B cell (primary cell): ENCODE measurements at regions of chr13 and their contacts with region 1.

Region 1: DNA sequence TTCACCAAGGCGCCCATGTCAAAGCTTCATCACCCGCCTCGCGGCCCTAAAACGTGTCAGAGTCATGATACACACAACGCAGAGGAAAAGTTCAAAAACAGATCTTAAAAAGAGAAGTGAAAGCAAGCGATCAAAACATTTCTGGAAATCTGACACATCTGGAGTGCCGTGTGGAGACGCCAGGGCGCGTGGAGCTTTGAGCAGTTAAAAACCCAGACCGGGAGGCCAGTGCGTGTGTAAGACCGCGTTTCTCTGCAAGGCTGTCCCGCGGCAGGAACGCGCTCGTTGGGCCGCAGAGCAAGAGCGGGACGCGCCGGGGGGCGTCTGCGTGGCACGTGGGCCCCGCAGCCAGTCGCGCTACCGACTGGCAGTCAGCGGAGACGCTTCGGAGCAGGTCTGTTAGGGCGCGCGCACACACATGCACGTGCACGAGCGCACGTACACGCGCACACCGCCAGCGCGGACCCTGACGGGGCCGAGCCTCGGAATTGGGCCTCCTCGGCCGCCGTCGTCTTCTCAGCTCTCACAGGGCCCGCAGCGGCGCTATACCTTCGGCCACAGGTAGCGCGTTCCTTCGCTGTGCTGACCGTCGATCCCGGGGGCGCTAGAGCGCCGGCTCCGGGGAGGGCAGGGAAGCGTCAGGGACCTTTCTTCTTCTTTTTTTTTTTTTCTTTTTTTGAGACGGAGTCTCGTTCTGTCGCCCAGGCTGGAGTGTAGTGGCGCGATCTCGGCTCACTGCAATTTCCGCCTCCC is 35.8 kb downstream of the RNF6 start:
- DNase-seq: peak; percentile 99
- ATAC-seq: peak; percentile 87
- H3K4me3 ChIP-seq: peak overlapping the region; percentile 66 to 91 (median 73)
- H3K4me3 Mint-ChIP-seq: peak overlapping the region; percentile 91
- H3K27ac ChIP-seq: peak overlapping the region; percentile 86 to 88
- H3K27ac Mint-ChIP-seq: peak overlapping the region; percentile 96
- H3K4me1 ChIP-seq: peaks cover 33 to 44% of the 10 kb centered on the region in 2 donors
- H3K4me1 Mint-ChIP-seq: peaks cover 46% of the 10 kb centered on the region
- H3K27me3 ChIP-seq: no peaks in the 10 kb centered on the region
- H3K27me3 Mint-ChIP-seq: no peaks in the 10 kb centered on the region
- CTCF ChIP-seq: peak; percentile 72

Region 2: GRCh38 chr13:24512197-24512907 is 1673.9 kb before region 1 on chr13 and contains the start of gene PARP4:
- CTCF ChIA-PET with region 1: no interaction called
- POLR2A ChIA-PET with region 1: no interaction called
- intact Hi-C with region 1: loop called (anchors 5 kb)
- DNase-seq: peak; percentile 82
- ATAC-seq: peak; percentile 78
- H3K4me3 ChIP-seq: peak within 1 kb of the TSS; percentile 64 to 95 (median 86)
- H3K4me3 Mint-ChIP-seq: peak within 1 kb of the TSS; percentile 88
- H3K27ac ChIP-seq: peak within 1 kb of the TSS; percentile 57 to 81
- H3K27ac Mint-ChIP-seq: peak within 1 kb of the TSS; percentile 85
- H3K4me1 ChIP-seq: peaks cover 11 to 19% of the 10 kb centered on the region in 2 donors
- H3K4me1 Mint-ChIP-seq: peaks cover 28% of the 10 kb centered on the region
- H3K27me3 ChIP-seq: no peaks in the 10 kb centered on the region
- H3K27me3 Mint-ChIP-seq: no peaks in the 10 kb centered on the region
- CTCF ChIP-seq: no peak
- total RNA-seq, gene PARP4: 88.4 and 88.8 TPM in 2 replicates

Region 3: DNA sequence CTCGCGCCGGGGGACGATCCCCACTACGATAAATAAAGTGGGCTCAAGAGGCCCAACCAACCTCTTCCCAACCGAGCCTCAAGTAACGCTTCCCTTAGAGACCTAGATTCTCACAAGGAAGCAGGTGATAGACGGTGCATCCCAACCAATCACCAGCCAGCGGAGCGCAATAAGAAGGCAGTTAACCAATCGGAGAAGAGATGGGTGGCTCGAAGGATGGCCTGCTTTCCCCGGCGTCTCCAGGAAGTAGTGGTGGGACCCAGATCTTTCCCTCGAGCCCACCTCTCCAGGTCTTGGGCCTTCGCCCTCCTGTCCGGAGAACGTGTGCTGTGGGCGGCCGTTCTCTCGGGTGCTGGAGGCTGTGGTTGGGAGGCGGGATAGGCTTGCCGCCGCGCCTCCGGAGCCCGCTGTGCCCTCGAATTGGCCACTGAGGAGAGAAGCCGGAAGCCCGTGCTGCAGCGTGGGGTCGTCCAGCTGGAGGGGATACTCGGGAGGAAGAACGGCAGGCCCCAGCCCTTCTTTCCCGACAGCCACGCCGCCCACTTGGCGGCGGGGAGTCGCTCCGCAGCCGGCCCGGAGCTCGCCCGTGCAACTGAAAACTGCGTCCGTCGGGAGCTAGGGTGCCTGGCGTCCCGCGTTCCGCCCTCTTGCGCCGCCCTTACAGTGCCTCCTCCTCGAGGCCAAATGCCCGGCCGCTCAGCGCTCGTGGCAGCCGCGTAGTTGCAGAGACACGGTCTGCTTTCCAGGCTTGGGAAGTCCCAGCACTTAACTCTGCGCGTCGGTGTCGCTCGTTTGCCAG is 35.6 kb after region 1 on chr13 and contains the start of gene RNF6:
- CTCF ChIA-PET with region 1: interaction called, 35 read pairs
- POLR2A ChIA-PET with region 1: interaction called, 23 read pairs
- intact Hi-C with region 1: loop called (anchors 1 kb)
- DNase-seq: peak; percentile 94
- ATAC-seq: peak; percentile 94
- H3K4me3 ChIP-seq: peak within 1 kb of the TSS; percentile 86 to 99 (median 99)
- H3K4me3 Mint-ChIP-seq: peak within 1 kb of the TSS; percentile 95
- H3K27ac ChIP-seq: peak within 1 kb of the TSS; percentile 94 to 95
- H3K27ac Mint-ChIP-seq: peak within 1 kb of the TSS; percentile 100
- H3K4me1 ChIP-seq: peaks cover 16 to 23% of the 10 kb centered on the region in 2 donors
- H3K4me1 Mint-ChIP-seq: peaks cover 30% of the 10 kb centered on the region
- H3K27me3 ChIP-seq: no peaks in the 10 kb centered on the region
- H3K27me3 Mint-ChIP-seq: no peaks in the 10 kb centered on the region
- CTCF ChIP-seq: no peak
- total RNA-seq, gene RNF6: 46.8 and 52.4 TPM in 2 replicates

Region 4: DNA sequence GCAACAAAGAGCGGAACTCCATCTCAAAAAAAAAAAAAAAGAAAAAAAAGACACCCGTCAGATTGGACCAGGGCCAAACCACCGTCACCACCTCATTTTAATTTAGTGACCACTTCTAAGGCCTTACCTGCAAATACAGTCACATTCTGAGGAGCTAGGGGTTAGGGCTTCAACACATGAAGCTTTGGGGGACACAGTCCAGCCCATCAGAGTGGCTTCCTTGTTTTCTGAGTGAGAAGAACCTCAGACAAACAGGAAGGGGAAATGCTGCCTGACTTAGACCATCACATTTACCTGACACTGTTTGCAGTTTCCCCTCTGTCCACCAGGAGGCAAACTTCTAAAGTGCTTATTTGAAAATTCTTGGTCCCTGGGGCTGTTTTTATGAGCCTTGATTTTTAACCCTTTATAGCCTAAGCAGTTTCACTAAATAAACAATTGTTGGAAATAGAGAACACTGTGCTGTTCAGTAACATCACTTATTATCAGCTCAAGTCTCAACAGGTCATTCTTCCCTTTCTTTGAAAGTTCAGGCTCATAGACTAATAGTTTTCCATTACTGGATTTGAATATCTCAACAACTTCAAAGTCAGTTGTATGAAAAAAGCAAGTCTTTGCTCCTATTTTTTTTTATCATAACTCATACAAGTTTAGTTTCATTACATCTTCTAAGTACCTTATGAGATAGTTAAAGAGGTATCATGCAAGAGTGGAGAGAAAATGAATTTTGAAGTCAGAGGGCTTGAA is 296.3 kb after region 1 on chr13:
- CTCF ChIA-PET with region 1: interaction called, 24 read pairs
- POLR2A ChIA-PET with region 1: interaction called, 8 read pairs
- intact Hi-C with region 1: loop called (anchors 1 kb)
- DNase-seq: peak; percentile 78
- ATAC-seq: peak; percentile 89
- H3K4me3 ChIP-seq: peak overlapping the region in 3 of 5 experiments; percentile 25 to 46 (median 36)
- H3K4me3 Mint-ChIP-seq: peak overlapping the region; percentile 62
- H3K27ac ChIP-seq: no peak overlapping the region
- H3K27ac Mint-ChIP-seq: peak overlapping the region; percentile 72
- H3K4me1 ChIP-seq: peaks cover 0 to 5% of the 10 kb centered on the region in 2 donors
- H3K4me1 Mint-ChIP-seq: peaks cover 4% of the 10 kb centered on the region
- H3K27me3 ChIP-seq: no peaks in the 10 kb centered on the region
- H3K27me3 Mint-ChIP-seq: peaks cover 4% of the 10 kb centered on the region
- CTCF ChIP-seq: peak; percentile 82

Region 5: GRCh38 chr13:26698392-26699196 is 512.3 kb after region 1 on chr13:
- CTCF ChIA-PET with region 1: interaction called, 83 read pairs
- POLR2A ChIA-PET with region 1: no interaction called
- intact Hi-C with region 1: no loop called
- DNase-seq: peak; percentile 80
- ATAC-seq: peak; percentile 87
- H3K4me3 ChIP-seq: no peak overlapping the region
- H3K4me3 Mint-ChIP-seq: no peak overlapping the region
- H3K27ac ChIP-seq: no peak overlapping the region
- H3K27ac Mint-ChIP-seq: no peak overlapping the region
- H3K4me1 ChIP-seq: peaks cover 0 to 5% of the 10 kb centered on the region in 2 donors
- H3K4me1 Mint-ChIP-seq: peaks cover 6% of the 10 kb centered on the region
- H3K27me3 ChIP-seq: peaks cover 0 to 9% (median 0%) of the 10 kb centered on the region in 4 experiments
- H3K27me3 Mint-ChIP-seq: peaks cover 9% of the 10 kb centered on the region
- CTCF ChIP-seq: peak; percentile 97

Region 6: DNA sequence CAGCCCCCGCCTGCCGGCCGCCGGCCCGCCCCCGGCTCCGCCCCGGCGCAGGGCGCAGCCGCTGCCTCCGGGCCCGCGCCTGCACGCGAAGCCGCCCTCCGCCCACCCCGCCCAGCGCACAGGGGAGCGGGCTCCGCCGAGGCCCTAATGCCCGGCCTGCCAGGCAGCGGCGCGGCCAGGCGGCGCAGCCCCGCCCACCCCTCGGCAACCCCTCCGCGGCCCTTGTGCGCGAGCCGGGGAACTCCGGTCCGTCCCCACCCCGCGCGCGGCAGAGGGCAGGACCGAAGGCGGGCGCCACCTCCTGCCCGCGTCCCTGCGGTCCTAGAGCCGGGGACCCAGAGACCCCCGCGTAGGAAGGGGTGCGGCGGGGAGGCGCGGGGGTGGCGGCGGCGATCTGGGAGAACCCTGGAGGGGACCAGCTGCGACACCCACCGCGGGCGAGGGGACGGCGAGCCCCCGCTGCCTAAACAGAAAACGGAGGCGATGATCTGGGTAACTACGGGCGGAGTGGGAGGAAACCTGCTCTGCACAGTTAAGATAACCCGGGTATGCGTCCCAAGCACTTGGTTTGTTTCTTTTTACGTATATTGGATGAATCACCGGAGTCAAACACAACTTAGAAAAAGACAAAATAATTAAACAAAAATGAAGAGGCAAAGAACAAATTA is 985.7 kb after region 1 on chr13:
- CTCF ChIA-PET with region 1: no interaction called
- POLR2A ChIA-PET with region 1: no interaction called
- intact Hi-C with region 1: loop called (anchors 10 kb)
- DNase-seq: peak; percentile 95
- ATAC-seq: peak; percentile 88
- H3K4me3 ChIP-seq: peak overlapping the region; percentile 61 to 86 (median 83)
- H3K4me3 Mint-ChIP-seq: peak overlapping the region; percentile 86
- H3K27ac ChIP-seq: peak overlapping the region; percentile 92 to 94
- H3K27ac Mint-ChIP-seq: peak overlapping the region; percentile 95
- H3K4me1 ChIP-seq: peaks cover 43 to 54% of the 10 kb centered on the region in 2 donors
- H3K4me1 Mint-ChIP-seq: peaks cover 67% of the 10 kb centered on the region
- H3K27me3 ChIP-seq: no peaks in the 10 kb centered on the region
- H3K27me3 Mint-ChIP-seq: no peaks in the 10 kb centered on the region
- CTCF ChIP-seq: no peak